GM10248 (cell line): ENCODE measurements at regions of chr12 and their contacts with region 1.

Region 1: GRCh38 chr12:103571286-103571685 is 15.8 kb upstream of the STAB2 start:
- DNase-seq: no peak
- CTCF ChIP-seq: no peak

Region 2: GRCh38 chr12:103583004-103583403 is 11.7 kb after region 1 on chr12:
- CTCF ChIA-PET with region 1: interaction called, 15 read pairs
- POLR2A ChIA-PET with region 1: no interaction called
- DNase-seq: no peak
- CTCF ChIP-seq: no peak